Cardiac septum (tissue), 1 donor: ENCODE measurements at regions of chr10 and their contacts with region 1.

Region 1: DNA sequence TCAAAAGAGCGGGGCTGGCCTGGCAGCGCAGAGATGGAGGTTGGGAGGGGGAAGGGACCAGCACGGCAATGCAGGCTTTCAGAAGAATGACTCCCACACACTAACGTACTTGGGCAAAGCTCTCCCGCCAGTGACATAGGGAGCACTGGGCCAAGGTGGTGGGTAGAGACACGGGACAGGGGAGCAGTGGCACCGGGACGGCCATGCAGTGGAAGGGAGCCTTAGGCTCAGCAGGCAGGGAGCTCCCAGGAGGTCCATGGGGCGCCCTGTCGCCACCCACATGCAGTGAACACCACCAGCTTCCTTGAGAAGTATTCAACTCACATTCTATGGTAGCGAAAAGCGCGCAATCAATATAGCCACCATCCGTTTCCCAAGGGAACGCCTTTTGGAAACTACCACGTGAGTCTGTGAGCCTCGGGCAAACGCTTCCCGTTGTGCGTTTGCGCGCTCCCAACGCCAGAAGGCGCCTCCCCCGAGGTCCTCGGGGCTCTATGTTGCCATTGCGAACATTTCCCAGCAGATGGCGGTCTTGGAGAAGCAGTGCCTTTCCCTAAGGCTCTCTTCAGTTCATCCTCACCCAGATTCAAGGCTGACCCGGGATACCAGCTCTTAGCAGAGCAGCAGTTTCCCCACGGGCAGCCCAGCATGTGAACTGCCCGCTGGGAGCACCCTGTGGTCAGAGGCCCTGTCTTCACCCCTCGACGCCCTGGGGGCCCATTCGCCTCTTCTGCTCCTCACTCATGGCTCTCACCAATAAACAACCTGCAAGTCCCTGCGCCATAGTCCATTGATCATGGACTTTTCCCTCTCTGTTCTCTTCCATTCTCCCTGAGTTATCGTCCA is 16.4 kb upstream of the OPALIN start:
- DNase-seq: peak; percentile 91

Region 2: GRCh38 chr10:95963226-95963990 is 411.8 kb before region 1 on chr10:
- intact Hi-C with region 1: no loop called
- DNase-seq: no peak

Region 3: DNA sequence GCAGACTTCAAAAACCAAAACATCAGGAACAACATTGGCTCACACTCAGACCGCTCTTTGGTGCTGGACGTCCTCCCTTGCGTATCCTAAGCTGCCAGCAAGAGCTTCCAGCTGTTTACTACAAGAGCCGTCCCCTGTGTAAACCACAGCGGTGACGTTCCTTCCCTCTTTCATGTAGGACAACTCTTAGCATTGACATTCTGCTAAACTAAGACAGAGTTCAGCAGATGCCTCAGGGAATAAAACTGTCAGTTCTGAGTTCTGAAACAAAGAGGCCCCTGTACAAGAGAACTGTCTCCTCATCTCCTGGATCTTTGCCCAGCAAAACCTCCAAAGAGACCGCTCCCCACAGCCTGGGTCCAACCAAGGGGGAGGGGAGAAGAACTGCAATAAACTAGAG is 41.4 kb after region 1 on chr10:
- intact Hi-C with region 1: no loop called
- DNase-seq: no peak

Region 4: DNA sequence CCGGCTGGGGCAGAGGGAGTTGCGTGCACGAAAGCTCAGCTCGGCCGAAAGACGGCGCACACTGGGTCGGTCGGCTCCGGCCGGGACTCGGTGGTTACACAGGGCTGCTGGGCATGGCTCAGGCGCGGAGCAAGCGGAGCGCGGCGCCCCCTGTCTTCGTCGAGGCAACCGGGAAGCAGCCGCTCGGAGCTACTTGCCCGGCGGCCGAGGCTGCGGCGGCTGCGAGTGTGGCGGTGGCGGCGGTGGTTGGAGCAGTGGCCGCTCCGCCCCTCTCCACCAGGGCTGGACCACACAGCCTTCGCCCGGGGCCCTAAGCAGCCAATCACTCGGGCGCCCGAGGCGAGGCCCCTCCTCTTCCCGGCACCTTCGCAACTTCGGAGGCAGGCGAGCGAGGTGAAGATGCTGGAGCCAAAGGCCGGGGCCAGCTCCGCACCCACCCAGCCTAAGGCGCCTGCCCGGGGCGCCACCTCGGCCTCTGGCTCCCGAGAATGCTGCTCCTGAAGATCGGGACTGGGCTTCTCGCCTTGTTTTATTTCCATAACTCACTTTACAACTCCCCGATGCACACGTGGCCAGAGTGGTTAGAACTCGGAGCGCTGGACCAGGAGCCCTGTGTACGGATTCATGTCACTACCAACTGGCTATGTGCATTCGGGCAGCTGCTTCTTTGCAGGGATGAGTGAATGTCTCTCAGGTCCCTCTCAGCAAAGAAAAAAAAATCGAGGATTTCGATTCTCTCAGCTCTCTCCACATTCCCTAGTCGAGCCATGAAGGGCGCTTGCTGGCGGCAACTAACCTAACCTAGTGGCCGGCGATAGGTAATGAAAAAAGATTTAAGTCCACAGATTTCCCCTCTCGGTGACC is 138.7 kb after region 1 on chr10 and contains the start of gene TLL2:
- intact Hi-C with region 1: loop called (anchors 5 kb)
- DNase-seq: peak; percentile 92
- total RNA-seq, gene TLL2: 3.8 TPM

Region 5: DNA sequence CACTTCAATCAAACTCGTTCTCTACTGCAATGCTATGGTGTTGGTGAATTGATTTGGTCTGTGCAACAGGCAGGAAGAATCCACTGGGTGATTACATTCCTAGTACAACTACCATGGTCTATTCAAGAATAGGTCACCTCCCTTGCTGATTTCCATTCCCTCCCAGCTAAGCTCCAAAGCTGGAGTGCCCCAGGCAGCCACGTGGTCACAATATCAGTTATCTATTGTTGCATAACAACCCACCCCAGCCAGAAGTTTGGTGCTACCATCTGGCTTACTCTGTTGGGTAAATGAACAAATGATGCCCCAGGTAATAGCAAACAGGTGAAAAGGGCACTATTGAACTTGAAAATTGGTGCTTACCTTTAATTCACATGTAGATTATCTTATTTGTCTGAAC is 397.4 kb after region 1 on chr10:
- intact Hi-C with region 1: no loop called
- DNase-seq: no peak